Left lung (tissue), 14 donors: ENCODE measurements at regions of chr1 and their contacts with region 1.

Region 1: DNA sequence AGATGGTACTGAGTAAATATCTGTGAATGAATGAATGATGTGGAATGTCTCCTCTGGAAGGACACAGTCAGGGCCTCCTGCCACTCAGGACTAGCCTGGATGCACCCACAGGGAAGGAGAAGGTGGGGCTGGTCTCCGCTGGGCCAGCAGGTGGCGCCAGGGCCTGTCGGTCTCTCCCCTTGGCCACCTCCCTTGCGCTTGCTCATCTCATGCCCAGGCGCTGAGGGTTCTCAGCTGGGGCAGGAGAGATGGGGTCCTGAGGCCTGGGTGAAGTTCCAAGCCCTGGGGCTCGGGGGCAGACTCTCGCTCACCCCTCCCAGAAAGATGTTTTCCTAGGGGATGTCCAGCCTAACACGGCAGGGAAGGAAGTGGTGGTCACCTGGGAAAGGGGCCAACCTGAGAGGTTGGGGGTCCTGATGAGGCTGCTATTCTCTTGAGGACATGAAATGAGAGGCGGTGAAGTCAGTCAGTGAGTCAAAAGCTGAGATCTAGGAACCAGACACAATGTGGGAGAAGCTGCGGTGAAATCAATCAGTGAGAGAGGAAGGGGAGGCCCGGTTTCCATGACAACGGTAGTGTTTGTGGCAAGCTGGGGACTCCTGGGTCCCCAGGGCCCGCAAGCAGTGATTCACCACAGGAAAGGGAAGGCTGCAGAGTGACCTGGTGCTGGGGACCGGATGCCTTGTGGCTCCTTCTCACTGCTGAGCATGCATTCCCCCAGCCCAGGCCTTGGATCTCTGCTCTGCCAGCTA is 14.6 kb upstream of the MEX3A start:
- DNase-seq: peak in 3 of 4 donors; percentile 85 to 97 (median 91)
- ATAC-seq: peak; percentile 98
- H3K4me3 ChIP-seq: no peak overlapping the region
- H3K27ac ChIP-seq: peak overlapping the region; percentile 56 to 71
- H3K4me1 ChIP-seq: peaks cover 8 to 35% of the 10 kb centered on the region in 2 donors
- H3K27me3 ChIP-seq: peaks cover 0 to 39% of the 10 kb centered on the region in 2 donors
- CTCF ChIP-seq: peak; percentile 88 to 95

Region 2: GRCh38 chr1:156129706-156130581 is 33.1 kb after region 1 on chr1:
- intact Hi-C with region 1: loop called (anchors 5 kb)
- DNase-seq: peak; percentile 79 to 93 (median 92)
- ATAC-seq: peak; percentile 71
- H3K4me3 ChIP-seq: no peak overlapping the region
- H3K27ac ChIP-seq: peak overlapping the region; percentile 93 to 98
- H3K4me1 ChIP-seq: peaks cover 52 to 57% of the 10 kb centered on the region in 2 donors
- H3K27me3 ChIP-seq: peaks cover 0 to 16% of the 10 kb centered on the region in 2 donors
- CTCF ChIP-seq: peak; percentile 92 to 97